ENCODE measurements at regions of chr10 and their contacts with region 1.

Region 1: DNA sequence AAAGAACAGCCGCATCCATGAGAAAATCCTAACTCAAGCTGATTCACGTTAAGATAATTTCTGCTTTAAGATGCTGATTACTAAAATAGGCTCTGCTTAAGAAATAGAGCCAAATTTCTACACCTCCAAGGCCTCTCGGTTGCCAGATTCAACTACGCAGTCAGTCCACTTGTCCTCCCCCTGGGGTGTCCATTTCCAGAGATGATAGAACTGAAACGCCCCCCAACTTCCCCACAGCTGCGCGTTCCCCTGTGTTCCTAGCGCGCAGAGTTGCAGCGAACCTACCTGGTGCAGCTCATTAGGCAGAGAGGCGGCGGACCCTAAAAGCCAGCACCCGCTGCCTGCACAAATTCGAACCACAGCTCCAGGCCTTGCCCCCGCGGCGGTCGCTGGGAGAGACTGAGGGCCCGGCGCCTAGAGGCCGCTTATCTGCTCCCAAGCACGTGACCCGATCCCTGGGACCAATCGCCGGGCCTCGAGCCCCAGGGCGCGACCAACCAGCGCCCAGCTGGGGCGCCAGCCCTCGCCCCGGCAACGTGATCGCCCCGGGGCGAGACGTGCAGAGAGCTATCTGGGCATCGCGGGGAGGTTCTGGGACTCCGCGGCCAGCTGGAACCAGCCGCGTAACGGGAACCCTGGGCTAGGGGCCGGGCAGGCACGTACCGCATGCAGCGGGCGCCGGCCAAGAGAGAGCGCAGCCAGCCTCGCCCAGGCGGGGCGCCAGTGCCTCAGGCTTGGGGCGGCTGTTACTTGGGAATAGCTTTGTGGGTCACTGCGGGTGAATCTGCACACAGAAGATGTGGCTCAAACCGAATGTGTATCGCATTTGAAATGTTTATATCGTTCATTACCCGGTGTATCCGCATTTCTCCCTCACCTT is at the start of gene PPP1R3C:
- DNase-seq: peak; percentile 94 to 97
- ATAC-seq: peak; percentile 67 to 71
- H3K4me3 ChIP-seq: peak within 1 kb of the TSS; percentile 65 to 77 (median 69)
- H3K27ac ChIP-seq: peak within 1 kb of the TSS; percentile 86 to 94 (median 91)
- H3K4me1 ChIP-seq: peaks cover 31 to 35% of the 10 kb centered on the region in 2 donors
- H3K27me3 ChIP-seq: no peaks in the 10 kb centered on the region
- CTCF ChIP-seq: peak in 3 of 5 experiments; percentile 11 to 32 (median 21)
- POLR2A ChIP-seq: peak; percentile 98 to 99
- total RNA-seq, gene PPP1R3C: 6.6 to 90.7 (median 65.5) TPM

Region 2: GRCh38 chr10:89643431-89644331 is 1989.2 kb before region 1 on chr10:
- in situ Hi-C with region 1: no loop called
- intact Hi-C with region 1: loop called (anchors 5 kb)
- DNase-seq: peak; percentile 89 to 91
- ATAC-seq: peak; percentile 77 to 78
- H3K4me3 ChIP-seq: peak overlapping the region; percentile 69 to 92 (median 80)
- H3K27ac ChIP-seq: peak overlapping the region; percentile 93 to 98 (median 96)
- H3K4me1 ChIP-seq: peaks cover 43 to 57% of the 10 kb centered on the region in 2 donors
- H3K27me3 ChIP-seq: no peaks in the 10 kb centered on the region
- CTCF ChIP-seq: no peak
- POLR2A ChIP-seq: peak; percentile 97 to 99

Region 3: DNA sequence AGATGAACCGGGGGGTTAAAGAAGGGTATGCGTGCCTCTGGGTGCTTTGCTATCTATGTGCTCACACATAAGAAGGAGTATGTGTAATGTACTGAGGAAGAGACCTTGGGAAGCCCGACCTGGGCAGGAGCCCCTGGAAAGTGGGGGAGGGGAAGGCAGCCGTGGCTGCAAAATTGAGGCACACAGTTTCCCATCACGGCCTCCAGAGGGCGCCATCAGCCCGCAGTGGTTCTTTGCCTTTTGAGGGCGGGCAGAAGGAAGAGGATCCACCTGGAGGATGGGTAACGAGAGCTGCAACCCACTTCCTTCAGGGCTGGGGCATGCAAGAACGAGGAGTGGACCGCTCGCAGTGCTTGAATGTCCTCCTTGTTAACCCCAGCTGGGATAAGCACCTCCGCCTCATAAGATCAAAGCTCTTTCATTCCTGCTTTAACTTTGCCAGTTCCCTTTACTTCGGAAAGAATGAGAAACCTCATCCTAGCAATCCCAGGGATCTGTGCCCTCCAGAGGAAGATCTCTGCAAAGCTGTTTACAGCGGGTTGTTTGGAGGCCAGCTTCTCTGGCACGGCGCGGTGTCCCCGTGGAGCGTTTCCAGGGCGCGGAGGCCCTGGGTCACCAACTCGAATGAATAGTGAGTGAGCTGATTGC is 334.6 kb before region 1 on chr10:
- in situ Hi-C with region 1: no loop called
- intact Hi-C with region 1: loop called (anchors 1 kb)
- DNase-seq: peak; percentile 57 to 72
- ATAC-seq: peak; percentile 87 to 94
- H3K4me3 ChIP-seq: peak overlapping the region; percentile 29 to 64 (median 38)
- H3K27ac ChIP-seq: peak overlapping the region in 1 of 4 donors; percentile 32
- H3K4me1 ChIP-seq: peaks cover 4 to 5% of the 10 kb centered on the region in 2 donors
- H3K27me3 ChIP-seq: no peaks in the 10 kb centered on the region
- CTCF ChIP-seq: peak; percentile 91 to 98 (median 94)
- POLR2A ChIP-seq: peak in 1 of 2 donors; percentile 3

Region 4: DNA sequence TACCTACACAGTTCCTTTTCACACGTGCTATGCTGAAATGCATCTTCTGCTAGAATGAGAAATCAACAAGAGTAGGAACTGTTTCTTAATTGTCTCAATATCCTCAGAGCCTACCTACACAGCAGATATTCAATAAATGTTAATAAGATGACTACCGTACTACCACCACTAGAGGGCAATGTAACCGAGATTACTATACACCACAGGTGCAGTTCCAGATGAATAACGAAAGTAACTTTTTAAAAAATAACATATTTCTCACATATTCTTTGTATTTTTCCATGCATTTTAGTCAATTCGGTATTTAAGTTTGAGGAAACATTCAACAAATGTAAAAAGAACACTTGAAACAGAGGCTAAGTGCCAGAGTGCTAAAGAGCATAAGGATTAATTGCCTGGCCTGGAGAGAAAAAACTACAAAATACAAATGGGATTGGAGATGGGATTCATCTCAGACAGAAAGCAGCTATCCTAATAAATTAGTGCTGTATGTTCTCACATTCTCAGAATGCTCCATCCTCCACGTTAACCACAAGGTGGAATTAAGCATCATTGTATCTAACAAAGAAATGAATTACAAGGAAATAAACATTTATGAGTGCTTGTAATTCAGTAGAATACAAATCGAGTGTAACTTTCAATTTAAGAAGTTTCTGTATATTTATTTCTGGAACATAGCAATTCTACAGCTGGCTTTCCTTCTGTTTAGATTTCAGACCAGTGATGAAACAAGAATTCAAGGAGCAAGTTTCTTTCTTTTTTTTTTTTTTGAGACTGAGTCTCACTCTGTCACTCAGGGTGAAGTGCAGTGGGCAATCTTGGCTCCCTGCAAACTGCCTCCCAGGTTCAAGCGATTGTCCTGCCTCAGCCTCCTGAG is 243.0 kb before region 1 on chr10:
- in situ Hi-C with region 1: loop called in 3 of 4 experiments (anchors 10 to 25 kb)
- intact Hi-C with region 1: no loop called
- DNase-seq: no peak
- ATAC-seq: peak; percentile 77 to 97
- H3K4me3 ChIP-seq: peak overlapping the region in 2 of 4 donors; percentile 18 to 36
- H3K27ac ChIP-seq: no peak overlapping the region
- H3K4me1 ChIP-seq: peaks cover 0 to 3% of the 10 kb centered on the region in 2 donors
- H3K27me3 ChIP-seq: peaks cover 0 to 4% (median 0%) of the 10 kb centered on the region in 3 donors
- CTCF ChIP-seq: peak; percentile 58 to 77 (median 61)
- POLR2A ChIP-seq: no peak

Region 5: GRCh38 chr10:91493313-91493712 is 139.6 kb before region 1 on chr10:
- in situ Hi-C with region 1: loop called (anchors 5 kb)
- intact Hi-C with region 1: no loop called
- DNase-seq: no peak
- ATAC-seq: peak in 1 of 2 donors; percentile 81
- H3K4me3 ChIP-seq: no peak overlapping the region
- H3K27ac ChIP-seq: no peak overlapping the region
- H3K4me1 ChIP-seq: peaks cover 0 to 4% of the 10 kb centered on the region in 2 donors
- H3K27me3 ChIP-seq: no peaks in the 10 kb centered on the region
- CTCF ChIP-seq: peak; percentile 52 to 72 (median 56)
- POLR2A ChIP-seq: no peak

Region 6: DNA sequence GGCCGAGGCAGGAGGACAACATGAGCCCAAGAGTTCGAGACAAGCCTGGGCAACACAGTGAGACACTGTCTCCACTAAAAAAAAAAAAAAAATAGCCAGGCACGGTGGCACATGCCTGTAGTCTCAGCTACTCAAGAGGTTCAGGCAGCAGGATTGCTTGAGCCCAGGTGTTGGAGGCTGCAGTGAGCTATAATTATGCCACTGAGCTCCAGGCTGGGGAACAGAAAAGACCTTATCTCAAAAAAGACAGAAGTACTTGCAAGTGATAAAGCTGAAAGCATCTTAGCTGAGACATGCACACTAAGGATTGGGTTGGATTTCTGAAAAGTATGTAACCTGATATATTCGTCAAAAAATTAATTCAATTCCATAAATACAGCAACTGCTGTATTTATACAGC is 68.4 kb before region 1 on chr10:
- in situ Hi-C with region 1: loop called in 1 of 4 experiments (anchors 10 kb)
- intact Hi-C with region 1: loop called (anchors 2 kb)
- DNase-seq: no peak
- ATAC-seq: peak; percentile 16 to 19
- H3K4me3 ChIP-seq: no peak overlapping the region
- H3K27ac ChIP-seq: peak overlapping the region; percentile 70 to 80 (median 75)
- H3K4me1 ChIP-seq: peaks cover 31 to 35% of the 10 kb centered on the region in 2 donors
- H3K27me3 ChIP-seq: no peaks in the 10 kb centered on the region
- CTCF ChIP-seq: no peak
- POLR2A ChIP-seq: no peak

Region 7: GRCh38 chr10:91587710-91588638 is 44.9 kb before region 1 on chr10:
- in situ Hi-C with region 1: no loop called
- intact Hi-C with region 1: loop called (anchors 2 kb)
- DNase-seq: peak in 1 of 2 donors; percentile 61
- ATAC-seq: peak; percentile 20 to 37
- H3K4me3 ChIP-seq: peak overlapping the region in 2 of 4 donors; percentile 1 to 13
- H3K27ac ChIP-seq: peak overlapping the region; percentile 87 to 91 (median 90)
- H3K4me1 ChIP-seq: peaks cover 60 to 67% of the 10 kb centered on the region in 2 donors
- H3K27me3 ChIP-seq: no peaks in the 10 kb centered on the region
- CTCF ChIP-seq: no peak
- POLR2A ChIP-seq: no peak

Measured in gastrocnemius medialis (tissue), 4 donors.